ENCODE measurements at regions of chr1 and their contacts with region 1.

Region 1: GRCh38 chr1:212455803-212456528 is 23.2 kb downstream of the NENF start:
- DNase-seq: peak; percentile 91
- ATAC-seq: peak; percentile 78
- H3K4me3 Mint-ChIP-seq: no peak overlapping the region
- H3K27ac Mint-ChIP-seq: no peak overlapping the region
- H3K4me1 Mint-ChIP-seq: peaks cover 4% of the 10 kb centered on the region
- H3K27me3 Mint-ChIP-seq: no peaks in the 10 kb centered on the region
- CTCF ChIP-seq: peak; percentile 99

Region 2: DNA sequence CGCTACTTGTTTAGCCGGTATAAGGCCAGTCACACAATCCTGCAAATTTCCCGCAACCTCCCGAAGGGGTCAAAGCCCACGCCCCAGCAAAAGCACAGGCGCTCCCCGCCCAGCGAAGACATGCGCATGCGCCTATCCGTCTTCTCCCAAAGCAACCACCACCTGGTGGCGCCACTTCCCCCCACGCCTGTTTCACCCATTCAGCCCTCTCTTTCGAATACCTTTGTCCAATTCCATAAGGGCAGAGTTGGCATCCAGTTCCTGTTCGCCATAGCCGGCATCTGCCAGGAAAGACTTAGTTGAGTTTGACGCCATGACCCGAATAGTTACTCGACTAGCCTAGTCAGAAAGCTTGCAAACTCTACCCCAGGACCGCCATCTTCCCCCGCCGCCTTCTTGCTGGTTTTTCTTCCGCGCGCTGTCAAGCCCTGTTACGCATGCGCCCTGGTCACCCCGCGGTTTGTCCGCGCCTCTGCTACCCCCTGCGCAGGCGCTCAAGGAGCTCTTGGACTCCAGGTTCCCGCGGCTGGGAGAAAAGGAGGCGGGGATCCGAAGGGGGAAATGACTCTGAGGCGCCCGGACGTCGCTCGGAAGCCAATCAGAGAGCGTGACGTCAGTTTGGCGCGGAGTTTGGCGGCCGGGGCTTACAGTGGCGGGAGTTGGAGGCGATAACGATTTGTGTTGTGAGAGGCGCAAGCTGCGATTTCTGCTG is 420.7 kb before region 1 on chr1 and contains the starts of genes DTL and INTS7:
- CTCF ChIA-PET with region 1: interaction called, 14 read pairs
- POLR2A ChIA-PET with region 1: interaction called, 4 read pairs
- intact Hi-C with region 1: no loop called
- DNase-seq: peak; percentile 99
- ATAC-seq: peak; percentile 87
- H3K4me3 Mint-ChIP-seq: peak within 1 kb of the TSS; percentile 97
- H3K27ac Mint-ChIP-seq: peak within 1 kb of the TSS; percentile 100
- H3K4me1 Mint-ChIP-seq: peaks cover 52% of the 10 kb centered on the region
- H3K27me3 Mint-ChIP-seq: peaks cover 1% of the 10 kb centered on the region
- CTCF ChIP-seq: peak; percentile 88
- total RNA-seq, gene DTL: 92.0 to 95.9 TPM
- total RNA-seq, gene INTS7: 23.2 to 25.4 TPM

Region 3: GRCh38 chr1:212346601-212347000 is 109.4 kb before region 1 on chr1:
- CTCF ChIA-PET with region 1: interaction called, 17 read pairs
- POLR2A ChIA-PET with region 1: no interaction called
- intact Hi-C with region 1: no loop called
- DNase-seq: no peak
- ATAC-seq: no peak
- H3K4me3 Mint-ChIP-seq: no peak overlapping the region
- H3K27ac Mint-ChIP-seq: no peak overlapping the region
- H3K4me1 Mint-ChIP-seq: no peaks in the 10 kb centered on the region
- H3K27me3 Mint-ChIP-seq: no peaks in the 10 kb centered on the region
- CTCF ChIP-seq: no peak

Region 4: GRCh38 chr1:212432706-212433576 is 23.0 kb before region 1 on chr1 and contains the start of gene NENF:
- CTCF ChIA-PET with region 1: interaction called, 77 read pairs
- POLR2A ChIA-PET with region 1: interaction called, 5 read pairs
- intact Hi-C with region 1: no loop called
- DNase-seq: peak; percentile 80
- ATAC-seq: peak; percentile 99
- H3K4me3 Mint-ChIP-seq: peak within 1 kb of the TSS; percentile 74
- H3K27ac Mint-ChIP-seq: peak within 1 kb of the TSS; percentile 73
- H3K4me1 Mint-ChIP-seq: peaks cover 38% of the 10 kb centered on the region
- H3K27me3 Mint-ChIP-seq: no peaks in the 10 kb centered on the region
- CTCF ChIP-seq: no peak
- total RNA-seq, gene NENF: 27.7 to 35.4 TPM

Region 5: DNA sequence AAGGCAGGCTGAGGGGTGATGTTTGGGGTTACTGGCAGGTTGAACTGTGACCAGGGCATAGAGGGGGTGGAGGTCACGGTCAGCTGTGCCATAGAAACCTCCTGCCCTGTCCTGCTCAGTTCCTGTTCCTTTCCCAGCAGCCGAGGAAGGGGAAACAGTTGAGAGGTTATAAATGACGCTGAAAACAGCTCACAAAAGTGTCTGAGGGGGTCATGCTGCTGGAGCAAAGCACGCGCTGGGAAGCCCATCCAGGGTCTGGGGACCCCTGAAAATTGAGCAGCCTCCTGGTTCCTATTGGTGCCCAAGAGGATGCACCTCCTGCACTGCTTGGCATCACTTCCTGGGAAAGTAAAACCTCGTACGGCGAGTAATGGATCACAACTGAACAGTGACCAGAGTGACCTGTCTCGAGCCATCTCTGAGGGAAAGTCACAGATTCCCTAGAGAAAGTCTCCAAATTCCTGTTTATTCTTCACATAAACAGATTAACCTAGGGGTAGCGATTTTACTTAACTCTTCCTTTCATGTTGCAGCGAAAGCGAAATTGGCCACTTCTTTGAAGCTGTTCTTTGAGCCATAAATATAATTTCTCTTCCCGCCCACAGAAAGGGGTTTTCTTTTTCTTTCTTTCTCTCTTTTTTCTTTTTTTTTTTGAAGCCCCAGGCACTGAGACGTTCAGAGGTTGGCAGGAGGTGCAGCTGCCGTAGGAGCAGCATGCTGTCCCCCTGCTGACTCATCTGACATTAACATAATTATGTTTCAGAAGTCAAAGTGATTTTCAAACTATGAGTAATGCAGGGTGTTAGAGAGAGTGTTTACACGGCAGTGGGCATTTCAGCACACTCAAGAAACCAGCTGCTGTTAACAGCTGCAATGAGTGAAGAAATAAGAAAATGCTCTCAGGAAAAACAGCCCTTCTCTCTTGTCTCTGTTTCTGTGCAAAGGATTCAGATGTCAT is 110.8 kb after region 1 on chr1:
- CTCF ChIA-PET with region 1: interaction called, 12 read pairs
- POLR2A ChIA-PET with region 1: no interaction called
- intact Hi-C with region 1: no loop called
- DNase-seq: peak; percentile 82
- ATAC-seq: peak; percentile 98
- H3K4me3 Mint-ChIP-seq: peak overlapping the region; percentile 86
- H3K27ac Mint-ChIP-seq: peak overlapping the region; percentile 97
- H3K4me1 Mint-ChIP-seq: peaks cover 39% of the 10 kb centered on the region
- H3K27me3 Mint-ChIP-seq: no peaks in the 10 kb centered on the region
- CTCF ChIP-seq: no peak

Region 6: GRCh38 chr1:212600980-212601379 is 145.0 kb after region 1 on chr1:
- CTCF ChIA-PET with region 1: no interaction called
- POLR2A ChIA-PET with region 1: no interaction called
- intact Hi-C with region 1: no loop called
- DNase-seq: peak; percentile 37
- ATAC-seq: peak; percentile 37
- H3K4me3 Mint-ChIP-seq: no peak overlapping the region
- H3K27ac Mint-ChIP-seq: peak overlapping the region; percentile 9
- H3K4me1 Mint-ChIP-seq: peaks cover 37% of the 10 kb centered on the region
- H3K27me3 Mint-ChIP-seq: peaks cover 39% of the 10 kb centered on the region
- CTCF ChIP-seq: no peak

Region 7: GRCh38 chr1:212994926-212995325 is 539.0 kb after region 1 on chr1:
- CTCF ChIA-PET with region 1: interaction called, 14 read pairs
- POLR2A ChIA-PET with region 1: no interaction called
- intact Hi-C with region 1: no loop called
- DNase-seq: no peak
- ATAC-seq: no peak
- H3K4me3 Mint-ChIP-seq: no peak overlapping the region
- H3K27ac Mint-ChIP-seq: no peak overlapping the region
- H3K4me1 Mint-ChIP-seq: peaks cover 3% of the 10 kb centered on the region
- H3K27me3 Mint-ChIP-seq: no peaks in the 10 kb centered on the region
- CTCF ChIP-seq: no peak

Measured in activated CD8-positive, alpha-beta T cell treated with anti-CD3 and anti-CD28 coated beads for 36 hours (primary cell).